IMR-90 (cell line): ENCODE measurements at regions of chr7 and their contacts with region 1.

Region 1: GRCh38 chr7:149883452-149883861 is 9.7 kb downstream of the ATP6V0E2 start:
- DNase-seq: peak; percentile 51
- ATAC-seq: peak; percentile 94
- H3K4me3 ChIP-seq: no peak overlapping the region
- H3K27ac ChIP-seq: no peak overlapping the region
- H3K4me1 ChIP-seq: peaks cover 3% of the 10 kb centered on the region; the same call in 1 of the 2 replicates
- H3K27me3 ChIP-seq: no peaks in the 10 kb centered on the region
- CTCF ChIP-seq: peak; percentile 77
- POLR2A ChIP-seq: no peak
- RAD21 ChIP-seq: peak; percentile 85

Region 2: DNA sequence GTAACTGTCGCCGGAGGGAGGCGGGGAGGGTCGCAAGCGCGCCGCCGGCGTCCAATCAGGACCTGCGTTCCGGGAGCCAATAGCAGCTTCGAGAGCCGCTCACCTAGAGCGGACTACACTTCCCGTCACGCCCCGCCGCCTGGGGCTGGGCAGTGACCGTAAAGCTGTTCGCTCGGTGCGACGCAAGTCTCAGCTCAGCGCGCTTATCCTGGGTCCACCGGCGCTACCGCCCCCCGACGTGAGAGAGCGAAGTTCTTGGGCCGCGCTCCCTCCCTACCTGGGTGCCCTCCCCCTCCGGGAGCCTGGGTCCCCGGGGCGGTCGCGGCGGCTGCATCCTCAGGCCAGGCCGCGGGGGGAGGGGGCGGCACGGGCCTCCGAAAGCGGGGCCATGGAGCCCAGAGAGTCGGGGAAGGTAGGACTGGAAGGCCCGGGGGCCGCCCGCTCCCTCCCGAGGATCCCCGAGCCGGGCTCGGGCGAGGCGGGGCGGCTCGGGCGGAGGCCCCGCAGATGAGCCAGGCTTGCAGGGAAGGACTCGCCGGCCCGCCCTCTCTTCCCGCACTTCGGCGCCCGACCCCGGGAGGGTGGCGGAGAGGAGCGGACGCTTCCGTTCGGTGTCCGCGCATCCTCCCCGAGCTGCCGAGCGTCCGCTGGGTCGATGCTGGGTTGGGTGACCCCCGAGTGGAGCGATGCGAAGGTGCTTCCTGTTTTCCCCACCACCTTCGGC is 45.1 kb before region 1 on chr7 and contains the start of gene ZNF862:
- CTCF ChIA-PET with region 1: no interaction called
- POLR2A ChIA-PET with region 1: no interaction called
- dilution Hi-C with region 1: no loop called
- in situ Hi-C with region 1: no loop called
- intact Hi-C with region 1: no loop called
- DNase-seq: peak; percentile 97
- ATAC-seq: peak; percentile 99
- H3K4me3 ChIP-seq: peak within 1 kb of the TSS; percentile 99
- H3K27ac ChIP-seq: peak within 1 kb of the TSS; percentile 52
- H3K4me1 ChIP-seq: 0 out of 2 replicates have a peak, but pooled peaks cover 3% of the 10 kb centered on the region
- H3K27me3 ChIP-seq: peaks cover 10% of the 10 kb centered on the region; the same call in 1 of the 2 replicates
- CTCF ChIP-seq: no peak
- POLR2A ChIP-seq: peak; percentile 42; the same call in 1 of the 2 replicates
- RAD21 ChIP-seq: no peak
- total RNA-seq, gene ZNF862: 3.3 and 5.9 TPM in 2 replicates

Region 3: GRCh38 chr7:150003304-150003810 is 119.9 kb after region 1 on chr7:
- CTCF ChIA-PET with region 1: no interaction called
- POLR2A ChIA-PET with region 1: no interaction called
- dilution Hi-C with region 1: no loop called
- in situ Hi-C with region 1: no loop called
- intact Hi-C with region 1: loop called (anchors 5 kb)
- DNase-seq: peak; percentile 0
- ATAC-seq: no peak
- H3K4me3 ChIP-seq: no peak overlapping the region
- H3K27ac ChIP-seq: no peak overlapping the region
- H3K4me1 ChIP-seq: no peaks in the 10 kb centered on the region
- H3K27me3 ChIP-seq: no peaks in the 10 kb centered on the region
- CTCF ChIP-seq: no peak
- POLR2A ChIP-seq: no peak
- RAD21 ChIP-seq: no peak